ENCODE measurements at regions of chr7 and their contacts with region 1.

Region 1: GRCh38 chr7:18495412-18496340 is at the start of gene HDAC9:
- DNase-seq: peak in 4 of 5 donors; percentile 58 to 73 (median 70)
- ATAC-seq: peak; percentile 86 to 95 (median 94)
- H3K4me3 ChIP-seq: peak within 1 kb of the TSS; percentile 25 to 65 (median 58)
- H3K27ac ChIP-seq: peak within 1 kb of the TSS; percentile 69 to 92 (median 81)
- H3K4me1 ChIP-seq: peaks cover 0 to 43% (median 15%) of the 10 kb centered on the region in 12 donors
- H3K27me3 ChIP-seq: no peaks in the 10 kb centered on the region
- CTCF ChIP-seq: no peak
- POLR2A ChIP-seq: peak in 1 of 2 donors; percentile 52
- total RNA-seq, gene HDAC9: 20.0 to 62.9 (median 40.3) TPM

Region 2: GRCh38 chr7:18352339-18353255 is 143.1 kb before region 1 on chr7:
- intact Hi-C with region 1: loop called in 6 of 10 experiments (anchors 2 to 10 kb)
- DNase-seq: peak in 4 of 5 donors; percentile 26 to 30 (median 29)
- ATAC-seq: peak in 3 of 4 donors; percentile 63 to 77 (median 71)
- H3K4me3 ChIP-seq: no peak overlapping the region
- H3K27ac ChIP-seq: no peak overlapping the region
- H3K4me1 ChIP-seq: peaks cover 0 to 12% (median 5%) of the 10 kb centered on the region in 12 donors
- H3K27me3 ChIP-seq: no peaks in the 10 kb centered on the region
- CTCF ChIP-seq: peak; percentile 33 to 77 (median 62)
- POLR2A ChIP-seq: no peak

Region 3: GRCh38 chr7:18393465-18394118 is 102.1 kb before region 1 on chr7:
- intact Hi-C with region 1: loop called in 4 of 10 experiments (anchors 5 to 10 kb)
- DNase-seq: no peak
- ATAC-seq: peak in 1 of 4 donors; percentile 57
- H3K4me3 ChIP-seq: no peak overlapping the region
- H3K27ac ChIP-seq: peak overlapping the region in 7 of 12 donors; percentile 5 to 46 (median 14)
- H3K4me1 ChIP-seq: peaks cover 0 to 44% (median 24%) of the 10 kb centered on the region in 12 donors
- H3K27me3 ChIP-seq: no peaks in the 10 kb centered on the region
- CTCF ChIP-seq: no peak
- POLR2A ChIP-seq: no peak

Region 4: DNA sequence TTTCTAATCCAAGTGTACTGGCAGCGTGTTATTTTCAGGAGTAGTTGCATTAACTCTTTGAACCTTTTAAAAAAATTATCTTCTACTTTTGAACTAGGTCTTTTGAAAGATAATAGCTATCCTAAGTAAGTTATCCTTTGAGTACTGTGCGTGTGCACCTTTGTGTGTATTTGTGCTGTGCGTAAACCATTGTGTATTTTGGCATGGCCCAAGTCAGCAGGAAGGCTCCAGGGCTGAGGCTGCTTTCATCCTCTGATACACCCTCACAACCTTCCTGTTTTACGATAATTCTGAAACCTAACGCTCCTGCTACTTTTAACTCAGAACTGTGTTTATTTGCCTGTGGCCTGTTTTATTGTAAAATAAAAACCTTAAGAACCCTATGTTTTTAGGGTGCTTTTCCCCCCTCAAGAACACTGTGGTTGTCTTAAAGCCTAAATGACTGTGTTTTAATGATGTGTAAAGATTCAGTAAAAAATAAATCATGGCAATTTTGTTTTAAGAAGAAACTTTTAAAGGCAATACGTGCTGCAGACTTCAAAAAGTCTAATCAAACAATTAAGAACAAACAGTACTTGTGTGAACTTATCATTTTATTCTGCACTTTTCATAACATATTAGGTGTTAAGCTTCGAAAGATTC is 57.4 kb after region 1 on chr7:
- intact Hi-C with region 1: loop called in 4 of 10 experiments (anchors 5 to 10 kb)
- DNase-seq: no peak
- ATAC-seq: peak; percentile 57 to 85 (median 70)
- H3K4me3 ChIP-seq: peak overlapping the region in 1 of 12 donors; percentile 10
- H3K27ac ChIP-seq: peak overlapping the region in 8 of 12 donors; percentile 11 to 36 (median 24)
- H3K4me1 ChIP-seq: peaks cover 2 to 57% (median 26%) of the 10 kb centered on the region in 12 donors
- H3K27me3 ChIP-seq: no peaks in the 10 kb centered on the region
- CTCF ChIP-seq: no peak
- POLR2A ChIP-seq: no peak

Region 5: GRCh38 chr7:18570890-18571478 is 75.3 kb after region 1 on chr7:
- intact Hi-C with region 1: loop called in 4 of 10 experiments (anchors 1 to 5 kb)
- DNase-seq: no peak
- ATAC-seq: peak in 3 of 4 donors; percentile 37 to 41 (median 38)
- H3K4me3 ChIP-seq: no peak overlapping the region
- H3K27ac ChIP-seq: no peak overlapping the region
- H3K4me1 ChIP-seq: peaks cover 0 to 35% (median 8%) of the 10 kb centered on the region in 12 donors
- H3K27me3 ChIP-seq: no peaks in the 10 kb centered on the region
- CTCF ChIP-seq: peak; percentile 16 to 69 (median 52)
- POLR2A ChIP-seq: no peak

Region 6: GRCh38 chr7:18788026-18788425 is 292.4 kb after region 1 on chr7:
- intact Hi-C with region 1: no loop called
- DNase-seq: no peak
- ATAC-seq: no peak
- H3K4me3 ChIP-seq: no peak overlapping the region
- H3K27ac ChIP-seq: no peak overlapping the region
- H3K4me1 ChIP-seq: no peaks in the 10 kb centered on the region
- H3K27me3 ChIP-seq: no peaks in the 10 kb centered on the region
- CTCF ChIP-seq: no peak
- POLR2A ChIP-seq: no peak